ENCODE measurements at regions of chr17 and their contacts with region 1.

Region 1: DNA sequence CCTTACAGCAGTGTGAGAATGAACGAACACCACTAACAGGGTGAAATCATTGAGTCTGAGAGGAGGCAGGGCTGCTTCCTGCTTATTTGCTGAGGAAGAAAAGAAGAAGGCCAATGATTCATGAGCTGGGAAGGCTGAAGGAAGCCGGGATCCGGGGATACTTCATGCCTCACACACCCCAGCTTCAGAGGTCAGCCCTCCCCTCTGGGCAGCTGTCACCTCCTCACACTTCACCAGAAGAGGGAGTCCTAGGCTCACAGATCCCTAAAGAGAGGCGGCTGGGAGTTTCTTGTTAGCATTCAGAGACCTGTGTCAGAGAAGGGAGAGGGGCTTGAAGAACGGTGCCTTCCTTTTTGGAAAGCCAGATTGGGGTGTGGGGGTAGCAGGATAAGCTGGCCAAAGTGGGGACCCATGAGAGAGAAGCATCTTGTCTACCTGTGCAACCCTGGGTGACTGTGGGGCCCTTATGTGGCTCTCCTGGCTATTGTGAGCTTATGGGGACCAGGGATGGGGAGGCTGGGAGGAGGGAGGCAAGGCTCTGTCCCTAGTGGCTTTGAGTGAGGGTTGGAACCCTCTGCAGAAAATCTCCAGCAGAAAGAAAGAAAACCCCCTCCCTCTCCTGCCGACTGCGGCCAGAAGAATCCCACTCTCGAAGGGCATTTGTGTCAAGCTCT is 94.6 kb downstream of the RGS9 start:
- DNase-seq: peak; percentile 72
- H3K4me3 Mint-ChIP-seq: no peak overlapping the region
- H3K27ac Mint-ChIP-seq: no peak overlapping the region
- H3K4me1 Mint-ChIP-seq: peaks cover 41% of the 10 kb centered on the region
- H3K27me3 Mint-ChIP-seq: peaks cover 12% of the 10 kb centered on the region

Region 2: DNA sequence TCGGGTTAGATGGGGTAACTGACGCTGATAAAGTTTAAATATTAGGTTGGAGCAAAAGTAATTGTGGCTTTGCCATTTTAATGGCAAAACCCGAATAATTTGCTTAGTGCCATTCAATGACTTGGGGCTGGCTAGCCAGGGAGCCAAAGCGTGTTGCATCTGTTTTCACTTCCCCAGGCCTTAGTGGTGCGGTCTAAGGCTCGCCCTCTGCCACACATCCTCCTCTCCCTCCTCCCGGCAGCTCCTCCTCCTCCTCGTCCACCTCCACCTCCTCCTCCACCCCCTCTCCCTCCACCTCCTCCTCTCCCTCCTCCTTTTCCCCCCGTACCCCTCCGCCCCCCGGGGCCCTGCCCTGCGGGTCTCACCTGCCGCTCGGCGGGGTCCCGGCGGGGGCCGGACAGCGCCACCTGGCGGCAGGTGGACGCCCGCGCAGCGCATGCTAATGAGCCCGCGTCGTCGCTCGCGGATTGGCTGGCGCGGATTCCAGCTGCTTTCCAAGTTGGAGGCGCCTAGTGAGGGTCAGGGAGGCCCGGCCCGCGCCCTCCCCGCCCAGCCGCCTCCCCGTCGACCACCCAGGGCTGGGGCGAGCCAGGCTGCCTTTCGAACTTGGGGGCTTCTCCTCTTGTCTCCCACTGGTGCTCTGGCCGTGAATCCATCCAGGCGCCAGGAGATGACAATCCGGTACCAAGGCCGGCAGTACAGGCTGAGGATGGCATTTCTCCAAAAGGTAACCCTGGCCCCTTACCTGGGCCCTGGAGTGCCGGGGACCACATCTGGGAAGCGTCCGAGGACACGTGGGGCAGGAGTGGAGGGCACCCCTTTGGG is 131.3 kb before region 1 on chr17:
- CTCF ChIA-PET with region 1: interaction called, 3 read pairs
- POLR2A ChIA-PET with region 1: no interaction called
- intact Hi-C with region 1: loop called (anchors 1 kb)
- DNase-seq: peak; percentile 85
- H3K4me3 Mint-ChIP-seq: peak overlapping the region; percentile 76
- H3K27ac Mint-ChIP-seq: peak overlapping the region; percentile 85
- H3K4me1 Mint-ChIP-seq: peaks cover 25% of the 10 kb centered on the region
- H3K27me3 Mint-ChIP-seq: no peaks in the 10 kb centered on the region

Region 3: DNA sequence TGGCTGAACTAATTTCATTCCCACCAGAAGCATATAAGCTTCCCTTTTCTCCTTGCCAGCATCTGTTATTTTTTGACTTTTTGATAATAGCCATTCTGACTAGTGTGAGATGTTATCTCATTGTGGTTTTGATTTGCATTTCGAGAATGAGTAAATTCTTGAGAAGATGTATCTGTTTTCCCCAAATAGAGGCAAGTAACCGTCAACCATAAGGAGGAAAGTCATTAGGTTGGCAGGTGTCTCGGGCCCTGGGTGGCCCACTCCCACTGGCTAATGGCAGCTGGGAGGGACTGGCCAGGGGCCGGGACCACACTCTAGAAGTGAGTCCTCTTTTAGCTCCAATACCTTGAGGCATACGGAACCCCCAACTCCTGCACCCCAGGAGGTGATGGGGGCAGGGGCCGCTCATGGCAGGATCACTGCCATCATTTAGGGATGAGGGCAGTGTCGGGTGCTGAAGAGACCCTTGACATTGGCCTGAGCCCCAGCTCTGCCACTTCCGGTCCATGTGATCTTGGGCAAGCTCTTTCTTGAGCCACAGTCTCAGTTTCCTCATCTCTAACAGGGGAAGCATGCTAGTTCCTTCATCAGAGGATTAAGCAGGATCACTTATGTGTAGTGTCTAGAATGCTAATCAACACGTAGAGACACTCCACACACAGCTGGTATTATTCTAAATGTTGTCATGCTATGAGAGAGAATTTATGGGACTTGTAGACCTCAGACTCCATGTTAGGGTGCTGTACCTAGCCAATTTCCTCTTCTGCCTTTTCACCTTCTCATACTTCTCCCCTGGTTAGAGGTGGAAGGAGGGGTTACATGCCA is 50.4 kb before region 1 on chr17:
- CTCF ChIA-PET with region 1: interaction called, 6 read pairs
- POLR2A ChIA-PET with region 1: interaction called, 14 read pairs
- intact Hi-C with region 1: loop called (anchors 1 kb)
- DNase-seq: peak; percentile 82
- H3K4me3 Mint-ChIP-seq: peak overlapping the region; percentile 16
- H3K27ac Mint-ChIP-seq: peak overlapping the region; percentile 90
- H3K4me1 Mint-ChIP-seq: peaks cover 68% of the 10 kb centered on the region
- H3K27me3 Mint-ChIP-seq: no peaks in the 10 kb centered on the region

Region 4: DNA sequence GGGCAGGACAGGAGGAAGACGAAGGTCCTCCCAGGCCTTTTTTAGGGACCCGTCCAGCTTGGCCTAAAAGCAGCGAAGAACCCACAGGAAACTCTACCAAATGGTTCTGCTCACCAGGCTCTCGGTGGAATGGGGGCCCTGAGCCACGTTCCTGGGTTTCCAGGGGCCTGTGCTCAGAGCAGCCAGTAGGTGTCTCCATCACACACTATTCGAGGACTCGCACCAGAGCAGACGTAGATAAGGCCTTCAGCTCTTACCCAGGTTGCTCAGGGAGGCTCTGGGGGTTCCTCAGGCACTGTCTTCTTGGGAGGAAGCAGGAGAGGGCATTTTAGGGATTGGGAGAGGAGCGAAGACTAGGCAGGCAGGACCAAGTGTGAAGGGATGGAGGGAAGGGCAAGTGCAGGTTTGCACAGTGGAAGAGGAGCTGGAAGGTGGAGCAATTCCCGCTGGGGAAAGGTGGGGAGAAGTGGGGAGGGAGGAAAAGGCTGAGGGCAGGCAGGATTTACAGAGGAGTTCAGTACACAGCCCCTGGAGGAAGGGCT is 62.5 kb after region 1 on chr17:
- CTCF ChIA-PET with region 1: interaction called, 25 read pairs
- POLR2A ChIA-PET with region 1: no interaction called
- intact Hi-C with region 1: loop called (anchors 1 kb)
- DNase-seq: peak; percentile 71
- H3K4me3 Mint-ChIP-seq: no peak overlapping the region
- H3K27ac Mint-ChIP-seq: no peak overlapping the region
- H3K4me1 Mint-ChIP-seq: no peaks in the 10 kb centered on the region
- H3K27me3 Mint-ChIP-seq: no peaks in the 10 kb centered on the region

Region 5: DNA sequence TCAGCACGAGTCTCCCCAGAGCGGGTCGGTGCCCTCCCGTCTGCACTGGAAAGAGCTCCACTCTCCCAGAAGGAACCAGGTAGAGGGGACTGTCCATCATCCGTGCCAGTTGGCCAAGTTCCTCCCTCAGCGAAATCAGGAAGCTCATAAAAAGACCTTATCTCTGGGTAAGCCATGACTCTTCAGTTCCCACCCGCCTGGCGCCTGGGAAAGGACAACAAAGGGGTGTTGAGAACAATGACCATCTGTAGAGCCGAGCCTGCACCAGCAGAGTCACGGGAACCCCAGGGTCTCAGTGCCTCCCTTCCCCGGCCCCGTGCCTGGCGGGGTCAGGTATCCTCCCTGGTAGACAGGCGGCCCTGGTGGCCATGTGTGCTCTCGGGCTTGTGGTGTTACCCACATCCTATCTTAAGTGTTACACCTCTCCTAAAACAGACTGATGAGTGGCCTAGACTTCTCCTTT is 138.9 kb after region 1 on chr17:
- CTCF ChIA-PET with region 1: no interaction called
- POLR2A ChIA-PET with region 1: no interaction called
- intact Hi-C with region 1: no loop called
- DNase-seq: no peak
- H3K4me3 Mint-ChIP-seq: no peak overlapping the region
- H3K27ac Mint-ChIP-seq: no peak overlapping the region
- H3K4me1 Mint-ChIP-seq: peaks cover 18% of the 10 kb centered on the region
- H3K27me3 Mint-ChIP-seq: peaks cover 17% of the 10 kb centered on the region

Region 6: DNA sequence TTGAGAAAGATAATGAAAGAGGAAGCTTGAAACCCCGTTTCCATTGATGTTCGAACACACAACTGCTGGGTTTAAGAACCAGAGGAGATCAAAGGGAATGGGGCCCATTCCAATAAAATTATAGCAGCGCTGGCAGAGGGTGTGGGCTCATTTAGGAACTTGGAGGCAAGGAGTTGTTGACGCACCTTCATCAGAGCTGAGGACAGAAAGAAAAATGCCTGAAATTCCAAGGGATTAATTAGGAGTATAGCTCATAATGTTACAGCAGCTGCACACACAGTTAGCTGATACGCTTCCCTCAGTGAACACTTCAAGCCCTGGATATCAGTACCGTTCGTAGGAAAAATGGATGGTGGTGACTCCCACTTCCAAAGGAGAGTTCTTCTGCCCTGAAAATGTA is 202.5 kb after region 1 on chr17:
- CTCF ChIA-PET with region 1: no interaction called
- POLR2A ChIA-PET with region 1: no interaction called
- intact Hi-C with region 1: no loop called
- DNase-seq: no peak
- H3K4me3 Mint-ChIP-seq: no peak overlapping the region
- H3K27ac Mint-ChIP-seq: no peak overlapping the region
- H3K4me1 Mint-ChIP-seq: peaks cover 18% of the 10 kb centered on the region
- H3K27me3 Mint-ChIP-seq: peaks cover 10% of the 10 kb centered on the region

Region 7: DNA sequence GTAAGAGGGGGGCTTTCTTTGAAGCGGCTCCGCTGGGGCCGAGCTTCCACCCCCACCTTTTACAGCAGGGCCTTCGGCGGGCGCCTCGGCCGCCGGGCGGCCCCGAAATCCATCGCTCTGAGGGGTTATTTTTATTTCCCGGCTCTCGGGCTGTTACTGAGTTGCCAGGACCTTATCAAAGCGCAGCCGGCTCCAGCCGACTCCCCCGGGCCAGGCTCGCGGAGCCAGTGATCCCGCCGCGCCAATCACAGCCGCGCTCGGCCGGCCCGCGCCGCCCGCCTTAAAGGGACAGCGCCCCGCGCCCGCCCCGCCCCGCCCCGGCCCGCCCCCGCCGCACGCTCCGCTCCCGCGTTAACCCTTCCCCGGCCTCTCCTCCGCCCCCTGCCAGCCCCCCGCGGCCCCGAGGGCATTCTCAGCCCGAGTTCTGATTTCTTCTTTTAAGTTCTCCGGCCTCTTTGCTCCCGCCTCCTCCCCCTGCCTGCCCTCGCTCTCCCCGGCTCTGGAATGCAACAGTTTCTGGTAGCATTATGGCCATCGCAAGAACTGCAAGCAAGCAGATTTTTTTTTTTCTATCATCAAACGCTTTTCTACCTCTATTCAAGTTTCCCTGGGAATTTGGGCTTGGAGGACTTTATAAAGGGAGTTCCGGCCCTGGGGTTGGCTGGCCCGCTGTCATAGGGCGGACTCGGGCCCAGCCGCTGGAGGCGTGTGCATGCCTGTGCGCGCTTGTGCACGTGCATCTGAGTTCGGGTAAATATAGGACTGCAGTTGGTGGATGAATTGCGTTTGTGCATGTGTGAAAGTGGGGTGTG is 329.8 kb after region 1 on chr17 and contains the start of gene AXIN2:
- CTCF ChIA-PET with region 1: interaction called, 38 read pairs
- POLR2A ChIA-PET with region 1: no interaction called
- intact Hi-C with region 1: loop called (anchors 1 kb)
- DNase-seq: peak; percentile 91
- H3K4me3 Mint-ChIP-seq: peak within 1 kb of the TSS; percentile 70
- H3K27ac Mint-ChIP-seq: peak within 1 kb of the TSS; percentile 74
- H3K4me1 Mint-ChIP-seq: peaks cover 15% of the 10 kb centered on the region
- H3K27me3 Mint-ChIP-seq: no peaks in the 10 kb centered on the region
- total RNA-seq, gene AXIN2: 3.9 to 4.4 TPM

Region 8: DNA sequence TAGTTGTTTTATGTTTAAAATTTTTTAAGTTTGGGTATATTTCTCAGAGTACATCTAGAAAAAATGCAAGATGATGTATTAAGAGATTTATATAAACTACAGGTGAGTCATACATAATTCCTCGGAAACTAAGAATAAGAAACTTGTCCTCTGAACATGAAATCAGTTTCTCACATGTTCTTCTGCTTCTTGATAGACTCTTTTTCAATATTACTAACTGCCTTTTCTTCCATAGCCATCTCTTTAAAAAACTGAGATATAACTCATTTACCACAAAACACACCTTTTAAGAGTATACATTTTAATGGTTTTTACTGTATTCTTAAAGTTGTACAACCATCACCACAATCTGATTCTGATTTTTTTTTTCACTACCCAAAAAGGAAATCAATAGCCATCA is 568.1 kb after region 1 on chr17:
- CTCF ChIA-PET with region 1: interaction called, 3 read pairs
- POLR2A ChIA-PET with region 1: no interaction called
- intact Hi-C with region 1: loop called (anchors 1 kb)
- DNase-seq: no peak
- H3K4me3 Mint-ChIP-seq: no peak overlapping the region
- H3K27ac Mint-ChIP-seq: peak overlapping the region; percentile 82
- H3K4me1 Mint-ChIP-seq: peaks cover 26% of the 10 kb centered on the region
- H3K27me3 Mint-ChIP-seq: no peaks in the 10 kb centered on the region

Region 9: DNA sequence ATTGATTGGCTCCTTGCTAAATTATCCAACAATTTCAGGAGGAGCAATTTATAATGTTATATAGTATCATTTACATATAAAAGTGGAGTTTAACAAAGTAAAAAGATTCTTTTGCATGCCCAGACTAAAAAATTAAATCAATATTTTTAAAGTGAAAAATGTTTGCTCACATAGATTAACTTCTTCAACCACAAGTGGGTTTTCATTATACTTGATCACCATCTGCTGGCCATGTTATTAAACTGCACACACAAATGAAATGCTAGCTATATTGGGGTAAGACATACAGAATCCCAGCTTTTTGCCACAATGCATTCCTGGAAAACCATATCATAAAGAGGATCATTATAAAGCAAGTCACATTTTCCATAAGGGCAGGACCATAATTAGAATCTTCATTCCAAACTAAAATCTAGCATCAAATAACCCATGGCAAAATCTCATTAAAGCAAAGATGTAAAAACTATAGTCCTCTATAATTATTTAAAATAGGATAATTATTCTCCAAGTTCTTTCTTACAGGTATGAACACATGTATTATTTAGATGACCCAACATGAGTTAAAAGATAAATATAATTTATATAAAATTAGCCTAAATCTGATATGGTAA is 933.8 kb after region 1 on chr17:
- CTCF ChIA-PET with region 1: interaction called, 74 read pairs
- POLR2A ChIA-PET with region 1: no interaction called
- intact Hi-C with region 1: loop called (anchors 1 kb)
- DNase-seq: no peak
- H3K4me3 Mint-ChIP-seq: no peak overlapping the region
- H3K27ac Mint-ChIP-seq: no peak overlapping the region
- H3K4me1 Mint-ChIP-seq: peaks cover 12% of the 10 kb centered on the region
- H3K27me3 Mint-ChIP-seq: no peaks in the 10 kb centered on the region